Naive thymus-derived CD4-positive, alpha-beta T cell (primary cell): ENCODE measurements at regions of chr6 and their contacts with region 1.

Region 1: DNA sequence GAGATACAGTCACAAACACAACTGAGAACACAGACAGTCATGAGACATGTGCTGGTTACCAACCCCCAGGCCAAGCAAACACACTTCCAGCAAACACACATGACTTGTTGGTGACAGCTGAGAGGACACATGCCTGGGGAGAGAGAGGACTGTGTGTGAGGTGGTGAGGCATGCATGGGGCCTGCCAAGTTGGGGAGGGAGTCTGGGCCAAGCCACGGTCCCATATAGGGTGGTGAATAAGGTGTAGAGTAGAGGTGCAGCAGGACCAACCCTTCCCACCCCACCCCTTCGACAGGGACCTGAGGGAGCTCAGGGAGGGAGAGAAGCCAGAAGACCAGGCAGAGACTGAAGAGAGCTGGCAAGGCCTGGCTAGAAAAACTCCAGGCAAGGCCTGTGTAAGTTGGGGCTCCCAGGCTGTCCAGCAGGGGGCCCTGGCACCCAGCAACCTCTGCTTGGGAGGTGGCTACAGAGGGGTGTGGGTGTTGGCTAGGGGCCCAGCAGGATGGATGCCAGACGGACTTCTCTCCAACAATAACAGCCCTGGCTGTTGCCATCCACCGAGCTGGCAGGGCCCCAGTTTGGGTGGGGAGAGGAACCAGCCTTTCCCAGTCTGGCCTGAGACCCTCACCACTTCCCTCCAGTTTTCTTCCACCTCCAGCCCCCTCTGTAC is 2.0 kb upstream of the SLC29A1 start:
- DNase-seq: peak; percentile 56 to 75 (median 71)
- ATAC-seq: peak; percentile 75
- H3K4me3 ChIP-seq: no peak overlapping the region
- H3K4me3 Mint-ChIP-seq: peak overlapping the region in 7 of 10 donors; percentile 27 to 93 (median 59)
- H3K27ac ChIP-seq: no peak overlapping the region
- H3K27ac Mint-ChIP-seq: peak overlapping the region in 5 of 9 donors; percentile 26 to 91 (median 48)
- H3K4me1 ChIP-seq: peaks cover 15 to 16% of the 10 kb centered on the region in 2 donors
- H3K4me1 Mint-ChIP-seq: peaks cover 6 to 48% (median 31%) of the 10 kb centered on the region in 7 donors
- H3K27me3 ChIP-seq: no peaks in the 10 kb centered on the region
- H3K27me3 Mint-ChIP-seq: peaks cover 0 to 18% (median 0%) of the 10 kb centered on the region in 5 donors

Region 2: GRCh38 chr6:44172731-44173500 is 48.5 kb before region 1 on chr6:
- CTCF ChIA-PET with region 1: interaction called, 3 read pairs
- POLR2A ChIA-PET with region 1: no interaction called
- intact Hi-C with region 1: loop called (anchors 1 to 5 kb)
- DNase-seq: peak; percentile 40 to 80 (median 62)
- ATAC-seq: peak; percentile 88
- H3K4me3 ChIP-seq: no peak overlapping the region
- H3K4me3 Mint-ChIP-seq: peak overlapping the region in 1 of 10 donors; percentile 60
- H3K27ac ChIP-seq: no peak overlapping the region
- H3K27ac Mint-ChIP-seq: no peak overlapping the region
- H3K4me1 ChIP-seq: no peaks in the 10 kb centered on the region
- H3K4me1 Mint-ChIP-seq: peaks cover 0 to 18% (median 13%) of the 10 kb centered on the region in 7 donors
- H3K27me3 ChIP-seq: no peaks in the 10 kb centered on the region
- H3K27me3 Mint-ChIP-seq: peaks cover 0 to 10% (median 4%) of the 10 kb centered on the region in 5 donors

Region 3: GRCh38 chr6:44237813-44238433 is 16.5 kb after region 1 on chr6:
- CTCF ChIA-PET with region 1: interaction called, 15 read pairs
- POLR2A ChIA-PET with region 1: interaction called, 7 read pairs
- intact Hi-C with region 1: loop called (anchors 1 kb)
- DNase-seq: peak; percentile 62 to 87 (median 80)
- ATAC-seq: peak; percentile 94
- H3K4me3 ChIP-seq: peak overlapping the region; percentile 93
- H3K4me3 Mint-ChIP-seq: peak overlapping the region; percentile 82 to 92 (median 90)
- H3K27ac ChIP-seq: peak overlapping the region; percentile 83
- H3K27ac Mint-ChIP-seq: peak overlapping the region; percentile 38 to 98 (median 89)
- H3K4me1 ChIP-seq: peaks cover 5 to 7% of the 10 kb centered on the region in 2 donors
- H3K4me1 Mint-ChIP-seq: peaks cover 0 to 28% (median 11%) of the 10 kb centered on the region in 7 donors
- H3K27me3 ChIP-seq: no peaks in the 10 kb centered on the region
- H3K27me3 Mint-ChIP-seq: no peaks in the 10 kb centered on the region

Region 4: GRCh38 chr6:44246663-44247337 is 25.4 kb after region 1 on chr6 and contains the start of gene HSP90AB1:
- CTCF ChIA-PET with region 1: interaction called, 7 read pairs
- POLR2A ChIA-PET with region 1: interaction called, 51 read pairs
- intact Hi-C with region 1: loop called (anchors 1 kb)
- DNase-seq: peak; percentile 78 to 98 (median 97)
- ATAC-seq: peak; percentile 90
- H3K4me3 ChIP-seq: peak within 1 kb of the TSS; percentile 99
- H3K4me3 Mint-ChIP-seq: peak within 1 kb of the TSS; percentile 94 to 99 (median 98)
- H3K27ac ChIP-seq: peak within 1 kb of the TSS; percentile 93
- H3K27ac Mint-ChIP-seq: peak within 1 kb of the TSS; percentile 96 to 100 (median 98)
- H3K4me1 ChIP-seq: peaks cover 15 to 19% of the 10 kb centered on the region in 2 donors
- H3K4me1 Mint-ChIP-seq: peaks cover 29 to 53% (median 44%) of the 10 kb centered on the region in 7 donors
- H3K27me3 ChIP-seq: no peaks in the 10 kb centered on the region
- H3K27me3 Mint-ChIP-seq: peaks cover 0 to 12% (median 0%) of the 10 kb centered on the region in 5 donors
- total RNA-seq, gene HSP90AB1: 345 to 750 (median 366) TPM

Region 5: GRCh38 chr6:44257025-44257752 is 35.8 kb after region 1 on chr6 and contains the start of gene SLC35B2:
- CTCF ChIA-PET with region 1: interaction called, 6 read pairs
- POLR2A ChIA-PET with region 1: interaction called, 4 read pairs
- intact Hi-C with region 1: loop called in 1 of 2 experiments (anchors 1 kb)
- DNase-seq: peak; percentile 53 to 83 (median 69)
- ATAC-seq: peak; percentile 87
- H3K4me3 ChIP-seq: peak within 1 kb of the TSS; percentile 74
- H3K4me3 Mint-ChIP-seq: peak within 1 kb of the TSS; percentile 80 to 94 (median 92)
- H3K27ac ChIP-seq: peak within 1 kb of the TSS; percentile 87
- H3K27ac Mint-ChIP-seq: peak within 1 kb of the TSS; percentile 75 to 97 (median 89)
- H3K4me1 ChIP-seq: peaks cover 14 to 18% of the 10 kb centered on the region in 2 donors
- H3K4me1 Mint-ChIP-seq: peaks cover 21 to 64% (median 60%) of the 10 kb centered on the region in 7 donors
- H3K27me3 ChIP-seq: no peaks in the 10 kb centered on the region
- H3K27me3 Mint-ChIP-seq: no peaks in the 10 kb centered on the region
- total RNA-seq, gene SLC35B2: 10.0 to 32.1 (median 17.6) TPM

Region 6: DNA sequence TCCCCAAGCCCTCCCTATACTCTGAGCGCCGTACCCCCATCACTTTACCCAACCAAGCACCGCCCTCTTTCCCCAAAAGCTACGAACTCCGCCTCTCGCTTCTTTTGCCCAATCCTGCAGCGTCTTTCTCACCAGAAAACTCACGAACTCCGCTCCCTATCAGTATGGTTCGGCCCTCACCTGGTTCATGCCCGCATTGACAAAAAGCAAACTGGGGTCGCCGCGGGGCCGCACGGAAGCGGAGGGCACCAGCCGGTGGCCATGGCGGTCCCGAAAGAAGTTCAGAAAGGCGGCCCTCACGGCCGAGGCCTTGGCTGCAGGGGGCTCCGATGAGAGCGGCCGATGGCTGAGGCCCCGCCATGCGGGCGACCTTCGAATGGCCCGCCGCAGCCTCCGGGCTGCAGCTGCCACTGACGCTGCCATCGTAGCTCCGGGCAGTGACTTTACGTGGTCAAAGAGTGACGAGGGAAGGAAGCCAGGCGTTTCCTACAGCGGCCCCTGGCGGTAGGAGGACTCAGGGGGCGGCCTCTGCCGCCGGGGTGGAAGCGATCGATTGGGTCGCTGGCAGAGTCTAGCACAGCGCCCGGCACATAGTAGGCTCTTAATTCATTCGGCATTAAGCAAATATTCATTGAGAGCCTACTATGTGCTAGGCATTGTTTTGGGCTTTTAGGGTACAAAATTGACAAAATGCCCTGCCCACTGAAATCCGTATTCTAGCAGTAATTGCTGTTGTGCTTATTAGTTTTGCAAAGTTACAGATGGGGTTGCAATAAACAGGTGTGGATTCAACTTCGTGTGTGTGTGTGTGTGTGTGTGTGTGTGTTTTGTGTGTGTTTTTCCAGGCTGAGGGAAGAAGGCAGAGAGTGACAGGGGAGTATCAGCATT is 91.7 kb after region 1 on chr6 and contains the start of gene AARS2:
- CTCF ChIA-PET with region 1: no interaction called
- POLR2A ChIA-PET with region 1: no interaction called
- intact Hi-C with region 1: loop called in 1 of 2 experiments (anchors 2 kb)
- DNase-seq: peak; percentile 79 to 95 (median 88)
- ATAC-seq: peak; percentile 99
- H3K4me3 ChIP-seq: peak within 1 kb of the TSS; percentile 91
- H3K4me3 Mint-ChIP-seq: peak within 1 kb of the TSS; percentile 94 to 100 (median 96)
- H3K27ac ChIP-seq: peak within 1 kb of the TSS; percentile 89
- H3K27ac Mint-ChIP-seq: peak within 1 kb of the TSS; percentile 88 to 98 (median 94)
- H3K4me1 ChIP-seq: peaks cover 7 to 9% of the 10 kb centered on the region in 2 donors
- H3K4me1 Mint-ChIP-seq: peaks cover 16 to 32% (median 25%) of the 10 kb centered on the region in 7 donors
- H3K27me3 ChIP-seq: no peaks in the 10 kb centered on the region
- H3K27me3 Mint-ChIP-seq: peaks cover 0 to 13% (median 3%) of the 10 kb centered on the region in 5 donors
- total RNA-seq, gene AARS2: 13.5 to 29.8 (median 20.9) TPM

Region 7: DNA sequence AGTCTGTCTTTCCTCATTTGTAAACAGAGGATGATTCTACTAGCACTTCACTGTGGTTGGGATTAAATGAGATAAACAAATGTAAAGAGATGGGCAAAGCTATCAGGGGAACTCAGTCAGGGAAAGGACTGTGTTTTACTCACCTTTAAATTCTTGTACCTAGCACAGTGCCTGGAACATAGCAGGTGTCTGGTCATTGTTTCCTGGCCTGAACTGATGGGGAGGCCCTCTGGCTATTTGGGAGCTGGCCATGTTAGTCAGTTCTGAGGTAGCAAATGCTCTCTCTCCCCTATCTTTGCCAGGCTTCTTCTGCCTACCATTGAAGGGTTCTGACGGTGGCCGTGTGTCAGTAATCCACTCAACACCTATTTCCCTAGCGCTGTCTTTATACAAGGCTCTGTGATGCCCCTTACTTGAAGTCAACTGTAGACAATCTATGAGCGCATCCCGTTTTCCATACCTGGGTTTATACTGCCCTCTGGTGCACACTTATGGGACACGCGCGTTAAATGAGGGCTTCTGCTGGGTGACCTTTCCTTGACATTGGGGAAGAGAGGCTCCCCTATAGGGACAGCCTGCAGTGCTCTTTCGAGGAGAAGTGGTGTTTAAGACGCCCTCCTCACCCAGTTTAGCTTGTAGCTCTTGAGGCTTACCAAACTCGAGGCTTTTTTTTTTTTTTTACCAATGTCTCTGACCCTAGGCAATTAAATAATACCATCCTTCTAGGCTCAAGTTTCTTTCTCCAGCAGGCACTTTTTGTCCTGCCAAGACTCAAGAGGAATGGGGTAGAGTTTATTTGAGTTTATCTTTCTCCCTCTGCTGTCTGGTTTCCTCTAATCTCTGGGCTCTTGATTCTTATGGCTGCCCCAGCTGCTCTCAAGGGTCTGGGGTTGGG is 117.0 kb after region 1 on chr6:
- CTCF ChIA-PET with region 1: interaction called, 3 read pairs
- POLR2A ChIA-PET with region 1: no interaction called
- intact Hi-C with region 1: loop called (anchors 1 kb)
- DNase-seq: peak; percentile 43 to 67 (median 62)
- ATAC-seq: peak; percentile 92
- H3K4me3 ChIP-seq: no peak overlapping the region
- H3K4me3 Mint-ChIP-seq: no peak overlapping the region
- H3K27ac ChIP-seq: no peak overlapping the region
- H3K27ac Mint-ChIP-seq: no peak overlapping the region
- H3K4me1 ChIP-seq: no peaks in the 10 kb centered on the region
- H3K4me1 Mint-ChIP-seq: peaks cover 0 to 4% (median 0%) of the 10 kb centered on the region in 7 donors
- H3K27me3 ChIP-seq: no peaks in the 10 kb centered on the region
- H3K27me3 Mint-ChIP-seq: peaks cover 18 to 33% (median 24%) of the 10 kb centered on the region in 5 donors

Region 8: DNA sequence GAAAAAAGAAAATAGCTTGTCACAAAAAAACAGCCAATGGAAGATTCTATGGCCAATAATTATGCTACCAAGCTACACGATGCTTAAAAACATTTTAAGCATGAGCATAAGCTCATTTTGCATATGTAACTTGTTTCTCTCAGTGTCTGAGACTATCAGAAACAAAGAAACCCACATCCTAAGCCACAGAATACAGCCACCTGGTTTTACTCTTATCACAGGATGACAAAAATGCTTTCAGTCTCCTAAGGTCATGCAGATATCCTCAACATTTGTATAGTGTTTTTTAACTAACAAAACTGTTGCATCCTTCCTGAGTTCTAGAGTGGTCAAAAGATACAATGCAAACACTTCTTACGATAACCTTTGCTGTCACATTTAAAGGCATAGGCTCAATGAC is 934.6 kb after region 1 on chr6:
- CTCF ChIA-PET with region 1: no interaction called
- POLR2A ChIA-PET with region 1: no interaction called
- intact Hi-C with region 1: no loop called
- DNase-seq: peak in 7 of 9 donors; percentile 46 to 81 (median 76)
- ATAC-seq: peak; percentile 96
- H3K4me3 ChIP-seq: no peak overlapping the region
- H3K4me3 Mint-ChIP-seq: peak overlapping the region in 9 of 10 donors; percentile 0 to 63 (median 39)
- H3K27ac ChIP-seq: no peak overlapping the region
- H3K27ac Mint-ChIP-seq: peak overlapping the region in 8 of 9 donors; percentile 27 to 89 (median 60)
- H3K4me1 ChIP-seq: peaks cover 7 to 12% of the 10 kb centered on the region in 2 donors
- H3K4me1 Mint-ChIP-seq: peaks cover 2 to 43% (median 29%) of the 10 kb centered on the region in 7 donors
- H3K27me3 ChIP-seq: no peaks in the 10 kb centered on the region
- H3K27me3 Mint-ChIP-seq: no peaks in the 10 kb centered on the region